T-cell (primary cell): ENCODE measurements at regions of chr4 and their contacts with region 1.

Region 1: DNA sequence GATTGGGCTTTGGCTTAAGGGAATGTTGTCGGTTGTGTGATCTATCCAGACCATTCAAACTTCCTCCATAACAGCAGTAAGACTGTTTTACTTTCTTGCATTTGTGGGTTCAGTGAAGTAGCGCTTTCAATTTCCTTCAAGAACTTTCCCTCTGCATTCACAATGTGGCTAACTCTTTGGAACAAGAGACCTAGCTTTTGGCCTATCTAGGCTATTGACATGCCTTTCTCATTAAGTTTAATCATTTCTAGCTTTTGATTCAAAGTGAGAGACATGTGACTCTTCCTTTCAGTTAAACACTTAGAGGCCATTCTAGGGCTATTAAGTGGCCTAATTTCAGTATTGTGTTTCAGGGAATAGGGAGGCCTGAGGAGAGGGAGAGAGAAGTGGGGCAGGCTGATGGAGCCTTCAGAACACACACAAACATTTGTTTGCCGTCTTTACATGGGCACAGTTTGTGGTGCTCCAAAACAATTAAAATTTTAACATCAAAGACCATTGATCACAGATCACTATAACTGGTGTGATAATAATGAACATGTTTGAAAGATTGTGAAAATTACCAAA is 34.1 kb downstream of the ADH5 start:
- DNase-seq: no peak
- ATAC-seq: no peak
- H3K4me3 ChIP-seq: no peak overlapping the region
- H3K4me3 Mint-ChIP-seq: no peak overlapping the region
- H3K27ac ChIP-seq: no peak overlapping the region
- H3K27ac Mint-ChIP-seq: peak overlapping the region; percentile 43 to 76
- H3K4me1 ChIP-seq: no peaks in the 10 kb centered on the region
- H3K4me1 Mint-ChIP-seq: peaks cover 8 to 24% (median 19%) of the 10 kb centered on the region in 3 donors
- H3K27me3 ChIP-seq: no peaks in the 10 kb centered on the region
- H3K27me3 Mint-ChIP-seq: no peaks in the 10 kb centered on the region

Region 2: DNA sequence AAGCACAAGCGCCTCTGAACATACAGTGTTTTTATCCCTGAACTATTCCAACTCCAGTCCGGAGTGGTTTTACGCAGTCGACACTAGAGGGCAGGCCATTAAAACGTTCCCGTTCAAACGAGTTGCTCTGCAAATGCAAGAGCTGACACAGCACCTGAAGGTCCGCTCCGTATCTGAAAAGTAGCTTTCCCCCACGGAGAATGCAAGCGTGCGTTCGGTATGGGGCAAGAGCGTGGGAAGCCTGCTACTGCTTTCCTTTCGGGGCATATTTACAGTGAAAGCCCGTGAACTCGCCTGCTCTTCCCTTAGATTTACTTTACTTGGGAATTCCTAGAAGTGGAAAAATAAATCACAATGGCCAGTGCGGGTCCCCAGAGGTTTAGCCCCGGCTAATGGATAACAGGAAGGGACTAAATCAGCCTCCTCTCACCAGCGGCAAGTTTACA is 586.9 kb before region 1 on chr4:
- CTCF ChIA-PET with region 1: interaction called, 7 to 12 read pairs
- POLR2A ChIA-PET with region 1: no interaction called
- DNase-seq: peak; percentile 27 to 83 (median 60)
- ATAC-seq: peak; percentile 90 to 96 (median 92)
- H3K4me3 ChIP-seq: peak overlapping the region; percentile 20 to 22
- H3K4me3 Mint-ChIP-seq: peak overlapping the region; percentile 57 to 72 (median 65)
- H3K27ac ChIP-seq: no peak overlapping the region
- H3K27ac Mint-ChIP-seq: peak overlapping the region in 1 of 2 donors; percentile 34
- H3K4me1 ChIP-seq: peaks cover 0 to 20% of the 10 kb centered on the region in 2 experiments
- H3K4me1 Mint-ChIP-seq: peaks cover 22 to 24% (median 24%) of the 10 kb centered on the region in 3 donors
- H3K27me3 ChIP-seq: peaks cover 0 to 3% of the 10 kb centered on the region in 2 experiments
- H3K27me3 Mint-ChIP-seq: no peaks in the 10 kb centered on the region

Region 3: GRCh38 chr4:99043346-99043745 is 11.2 kb before region 1 on chr4:
- CTCF ChIA-PET with region 1: interaction called, 6 to 14 read pairs
- POLR2A ChIA-PET with region 1: interaction called, 5 to 6 read pairs
- DNase-seq: peak in 5 of 35 experiments; percentile 6 to 66 (median 12)
- ATAC-seq: peak; percentile 83 to 98 (median 94)
- H3K4me3 ChIP-seq: no peak overlapping the region
- H3K4me3 Mint-ChIP-seq: peak overlapping the region in 2 of 3 donors; percentile 37 to 41
- H3K27ac ChIP-seq: peak overlapping the region; percentile 82
- H3K27ac Mint-ChIP-seq: peak overlapping the region; percentile 86 to 89
- H3K4me1 ChIP-seq: peaks cover 6 to 13% of the 10 kb centered on the region in 2 experiments
- H3K4me1 Mint-ChIP-seq: peaks cover 20 to 25% (median 20%) of the 10 kb centered on the region in 3 donors
- H3K27me3 ChIP-seq: no peaks in the 10 kb centered on the region
- H3K27me3 Mint-ChIP-seq: no peaks in the 10 kb centered on the region

Region 4: DNA sequence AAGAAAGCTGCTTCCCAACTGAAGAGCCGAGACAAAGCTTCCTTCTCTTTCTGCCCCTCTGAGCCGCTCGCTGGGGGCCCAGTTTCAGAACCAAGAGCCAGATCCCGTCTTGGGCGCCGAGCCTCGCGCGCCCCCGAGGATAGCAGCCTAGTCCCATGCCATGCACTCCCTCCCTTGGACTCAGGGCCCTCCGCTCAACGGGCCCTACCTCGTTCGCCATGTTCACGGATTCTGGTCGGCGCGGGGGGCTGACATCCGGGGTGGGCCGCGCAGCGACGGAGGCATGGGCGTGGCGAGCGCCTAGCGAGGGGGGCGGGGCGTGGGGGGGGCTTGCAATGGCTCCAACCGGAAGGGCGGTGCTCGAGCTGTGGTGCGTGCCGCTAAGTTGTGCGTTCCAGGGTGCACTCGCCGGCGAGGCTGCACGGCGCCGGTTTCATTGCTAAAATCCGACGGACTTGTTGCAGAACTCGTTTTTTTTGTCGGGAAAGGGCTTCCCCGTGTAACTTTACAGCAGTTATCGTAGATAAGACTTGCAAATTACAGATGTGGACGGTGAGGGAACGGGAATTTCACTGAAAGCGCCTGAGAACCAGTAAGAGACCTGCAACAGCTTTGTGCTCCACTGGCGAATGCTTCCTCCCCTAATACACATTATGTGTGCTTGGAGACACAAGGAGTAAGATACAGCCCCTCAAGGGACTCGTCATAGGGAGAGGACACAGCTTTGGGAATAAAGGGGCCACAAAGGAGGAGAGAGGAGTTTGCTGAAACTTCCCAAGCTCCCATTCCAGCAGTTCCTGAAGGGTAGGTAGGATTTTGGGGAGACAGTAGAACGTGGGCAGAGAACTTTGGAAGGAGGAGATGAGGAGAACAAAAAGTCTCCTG is 34.2 kb after region 1 on chr4 and contains the start of gene ADH5:
- CTCF ChIA-PET with region 1: interaction called, 3 to 15 read pairs
- POLR2A ChIA-PET with region 1: no interaction called
- DNase-seq: peak; percentile 77 to 94 (median 88)
- ATAC-seq: peak; percentile 93 to 99 (median 96)
- H3K4me3 ChIP-seq: peak within 1 kb of the TSS; percentile 92 to 93
- H3K4me3 Mint-ChIP-seq: peak within 1 kb of the TSS; percentile 97 to 99 (median 97)
- H3K27ac ChIP-seq: peak within 1 kb of the TSS; percentile 89
- H3K27ac Mint-ChIP-seq: peak within 1 kb of the TSS; percentile 99 to 100
- H3K4me1 ChIP-seq: peaks cover 15 to 30% of the 10 kb centered on the region in 2 experiments
- H3K4me1 Mint-ChIP-seq: peaks cover 54 to 67% (median 61%) of the 10 kb centered on the region in 3 donors
- H3K27me3 ChIP-seq: no peaks in the 10 kb centered on the region
- H3K27me3 Mint-ChIP-seq: no peaks in the 10 kb centered on the region
- total RNA-seq, gene ADH5: 51.1 to 80.6 (median 70.5) TPM

Region 5: DNA sequence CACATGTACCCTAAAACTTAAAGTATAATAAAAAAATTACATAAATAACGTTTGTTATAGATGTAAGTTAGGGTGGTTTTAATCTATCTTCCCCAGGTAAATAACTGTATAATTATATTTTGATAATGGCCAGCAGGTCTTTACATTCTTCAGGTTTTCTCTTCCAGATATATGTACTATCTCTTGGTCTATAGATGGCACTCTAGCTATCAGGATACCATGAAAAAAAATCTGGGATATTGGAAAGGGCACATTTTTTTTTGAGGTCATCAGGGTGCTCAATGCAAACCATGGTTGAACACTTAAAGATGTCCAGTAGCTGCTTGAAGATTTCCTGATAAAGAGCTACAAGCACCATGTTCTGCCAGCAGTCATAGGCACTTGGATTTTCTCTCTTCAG is 105.2 kb after region 1 on chr4:
- CTCF ChIA-PET with region 1: no interaction called
- POLR2A ChIA-PET with region 1: no interaction called
- DNase-seq: no peak
- ATAC-seq: no peak
- H3K4me3 ChIP-seq: no peak overlapping the region
- H3K4me3 Mint-ChIP-seq: no peak overlapping the region
- H3K27ac ChIP-seq: no peak overlapping the region
- H3K27ac Mint-ChIP-seq: no peak overlapping the region
- H3K4me1 ChIP-seq: no peaks in the 10 kb centered on the region
- H3K4me1 Mint-ChIP-seq: no peaks in the 10 kb centered on the region
- H3K27me3 ChIP-seq: no peaks in the 10 kb centered on the region
- H3K27me3 Mint-ChIP-seq: peaks cover 0 to 8% of the 10 kb centered on the region in 2 donors